PC-9 (cell line): ENCODE measurements at regions of chr3 and their contacts with region 1.

Region 1: GRCh38 chr3:185789891-185790830 is 34.7 kb downstream of the IGF2BP2 start:
- DNase-seq: peak; percentile 46 to 76
- H3K4me3 ChIP-seq: peak overlapping the region; percentile 1; the same call in 1 of the 2 replicates
- H3K27ac ChIP-seq: peak overlapping the region; percentile 59
- H3K4me1 ChIP-seq: peaks cover 69% of the 10 kb centered on the region
- H3K27me3 ChIP-seq: no peaks in the 10 kb centered on the region
- CTCF ChIP-seq: no peak

Region 2: GRCh38 chr3:185188816-185189215 is 601.3 kb before region 1 on chr3:
- CTCF ChIA-PET with region 1: no interaction called
- POLR2A ChIA-PET with region 1: no interaction called
- intact Hi-C with region 1: no loop called
- DNase-seq: no peak
- H3K4me3 ChIP-seq: no peak overlapping the region
- H3K27ac ChIP-seq: no peak overlapping the region
- H3K4me1 ChIP-seq: no peaks in the 10 kb centered on the region
- H3K27me3 ChIP-seq: no peaks in the 10 kb centered on the region
- CTCF ChIP-seq: no peak

Region 3: DNA sequence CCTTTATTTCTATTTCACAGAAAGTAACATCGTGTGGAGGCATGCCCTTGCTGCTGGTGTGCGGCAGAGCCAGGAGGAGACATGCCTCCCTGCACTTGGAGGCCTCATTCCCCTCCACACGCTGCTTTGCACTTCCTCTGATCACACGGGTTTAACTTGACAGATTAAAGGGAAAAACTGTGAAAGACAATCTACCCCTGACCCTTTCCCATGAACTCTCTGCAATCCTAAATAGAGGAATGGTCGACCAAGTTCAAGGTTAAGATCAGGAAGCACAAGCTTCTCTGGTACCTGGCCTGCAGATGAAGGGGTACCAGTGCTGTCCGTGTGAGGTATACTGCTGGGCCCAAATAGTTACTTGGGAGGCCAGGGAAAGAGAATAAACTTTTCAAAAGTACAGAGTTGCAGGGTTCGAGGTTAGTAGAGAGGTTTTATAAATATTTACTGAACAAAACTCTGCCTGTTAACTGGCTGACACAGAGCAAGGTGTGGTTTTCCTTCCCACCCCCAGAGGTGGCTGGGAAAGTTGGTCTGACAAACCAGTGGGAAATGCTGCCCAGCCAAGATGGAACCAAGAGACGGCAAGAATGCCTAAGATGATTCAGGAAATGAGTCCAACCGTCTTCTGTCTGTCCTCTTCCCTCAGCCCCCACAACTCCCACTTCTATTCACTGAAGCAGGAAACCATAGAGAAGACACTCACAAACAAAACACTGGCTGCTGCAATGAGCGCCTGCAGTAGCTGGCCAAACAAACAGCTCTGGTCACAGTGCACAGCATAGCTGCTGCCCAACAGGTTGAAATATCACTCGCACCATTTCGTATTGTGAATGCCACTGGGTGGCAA is 44.9 kb before region 1 on chr3:
- CTCF ChIA-PET with region 1: no interaction called
- POLR2A ChIA-PET with region 1: interaction called, 17 read pairs
- intact Hi-C with region 1: no loop called
- DNase-seq: peak in 1 of 2 experiments; percentile 64
- H3K4me3 ChIP-seq: no peak overlapping the region
- H3K27ac ChIP-seq: no peak overlapping the region
- H3K4me1 ChIP-seq: peaks cover 8% of the 10 kb centered on the region; the same call in 1 of the 2 replicates
- H3K27me3 ChIP-seq: no peaks in the 10 kb centered on the region
- CTCF ChIP-seq: no peak

Region 4: DNA sequence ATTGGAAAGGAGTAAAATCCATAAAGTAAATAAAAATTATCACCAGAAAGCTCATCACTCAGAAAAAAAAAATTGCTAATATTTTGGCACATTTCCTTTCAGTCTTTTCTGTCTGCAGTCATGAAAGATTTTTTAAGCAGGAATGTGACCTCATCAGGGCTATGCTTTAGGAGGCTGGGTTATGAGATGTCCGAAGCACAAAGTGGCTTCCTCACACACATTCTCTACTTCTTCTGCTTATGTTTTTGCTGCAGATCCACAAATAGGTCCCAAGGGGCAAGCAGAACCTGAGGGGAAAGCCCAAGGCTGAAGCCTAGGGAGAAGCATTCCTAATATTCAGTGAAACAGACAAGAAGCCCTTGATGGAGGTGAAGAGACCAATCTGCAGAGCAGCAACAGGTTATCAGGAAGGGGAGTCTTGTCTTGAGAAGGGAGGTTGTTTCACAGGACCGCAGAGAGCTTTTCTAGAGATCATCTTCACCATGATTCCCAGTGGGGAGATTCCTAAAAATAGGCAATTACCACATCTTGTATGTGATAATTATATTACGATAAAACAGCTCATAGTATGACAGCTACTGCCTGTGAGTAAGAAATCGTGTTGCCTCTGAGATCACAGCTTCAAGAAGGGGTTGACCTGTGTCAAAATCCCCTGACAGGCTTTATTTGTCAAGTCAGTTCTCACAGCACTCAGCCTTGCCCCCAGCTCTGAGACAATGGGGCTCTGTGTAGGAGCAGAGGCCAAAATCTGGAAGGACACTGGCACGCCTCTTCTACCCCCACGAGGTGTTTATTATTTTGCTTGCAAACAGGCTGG is 25.8 kb before region 1 on chr3:
- CTCF ChIA-PET with region 1: interaction called, 11 read pairs
- POLR2A ChIA-PET with region 1: no interaction called
- intact Hi-C with region 1: no loop called
- DNase-seq: no peak
- H3K4me3 ChIP-seq: no peak overlapping the region
- H3K27ac ChIP-seq: no peak overlapping the region
- H3K4me1 ChIP-seq: peaks cover 22% of the 10 kb centered on the region
- H3K27me3 ChIP-seq: no peaks in the 10 kb centered on the region
- CTCF ChIP-seq: no peak